Heart right ventricle (tissue), 16 donors: ENCODE measurements at regions of chr12 and their contacts with region 1.

Region 1: GRCh38 chr12:20472102-20472782 is 103.9 kb downstream of the PDE3A start:
- DNase-seq: no peak
- ATAC-seq: peak in 4 of 8 donors; percentile 4 to 24 (median 14)
- H3K4me3 ChIP-seq: no peak overlapping the region
- H3K27ac ChIP-seq: peak overlapping the region in 6 of 10 donors; percentile 24 to 66 (median 38)
- H3K4me1 ChIP-seq: peaks cover 9 to 96% (median 65%) of the 10 kb centered on the region in 9 donors
- H3K27me3 ChIP-seq: no peaks in the 10 kb centered on the region
- CTCF ChIP-seq: no peak

Region 2: GRCh38 chr12:20601668-20602280 is 129.5 kb after region 1 on chr12:
- intact Hi-C with region 1: loop called in 3 of 10 experiments (anchors 5 to 10 kb)
- DNase-seq: no peak
- ATAC-seq: peak in 2 of 8 donors; percentile 32 to 52
- H3K4me3 ChIP-seq: no peak overlapping the region
- H3K27ac ChIP-seq: peak overlapping the region in 8 of 10 donors; percentile 39 to 73 (median 57)
- H3K4me1 ChIP-seq: peaks cover 0 to 59% (median 12%) of the 10 kb centered on the region in 9 donors
- H3K27me3 ChIP-seq: no peaks in the 10 kb centered on the region
- CTCF ChIP-seq: peak in 8 of 9 donors; percentile 13 to 64 (median 52)